Transverse colon (tissue), 4 donors: ENCODE measurements at regions of chr9 and their contacts with region 1.

Region 1: DNA sequence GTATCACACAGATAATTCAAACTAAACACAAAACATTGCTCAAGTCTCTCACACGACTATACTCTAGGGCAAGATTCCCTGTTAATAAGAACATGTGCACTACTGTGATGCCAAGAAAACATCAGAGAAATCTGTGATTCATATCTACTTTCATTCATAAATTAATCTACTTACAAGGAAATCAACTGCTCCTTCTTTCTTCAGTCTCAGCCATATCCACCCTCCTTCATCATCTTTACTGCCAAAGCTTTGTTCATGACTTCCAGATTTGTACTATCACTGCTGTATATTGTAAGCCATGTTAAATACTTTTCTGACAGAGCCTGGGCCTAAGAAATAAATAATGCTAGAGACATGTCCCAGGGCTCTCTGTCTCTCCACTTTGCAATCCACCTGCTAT is 35.1 kb downstream of the CTNNAL1 start:
- DNase-seq: no peak
- H3K4me3 ChIP-seq: no peak overlapping the region
- H3K27ac ChIP-seq: no peak overlapping the region
- H3K4me1 ChIP-seq: peaks cover 0 to 5% (median under 1%) of the 10 kb centered on the region in 4 donors
- H3K27me3 ChIP-seq: no peaks in the 10 kb centered on the region
- CTCF ChIP-seq: no peak
- EP300 ChIP-seq: no peak
- POLR2A ChIP-seq: no peak

Region 2: GRCh38 chr9:108831536-108832500 is 146.4 kb before region 1 on chr9:
- in situ Hi-C with region 1: no loop called
- intact Hi-C with region 1: no loop called
- DNase-seq: no peak
- H3K4me3 ChIP-seq: no peak overlapping the region
- H3K27ac ChIP-seq: no peak overlapping the region
- H3K4me1 ChIP-seq: no peaks in the 10 kb centered on the region
- H3K27me3 ChIP-seq: no peaks in the 10 kb centered on the region
- CTCF ChIP-seq: no peak
- EP300 ChIP-seq: no peak
- POLR2A ChIP-seq: no peak

Region 3: DNA sequence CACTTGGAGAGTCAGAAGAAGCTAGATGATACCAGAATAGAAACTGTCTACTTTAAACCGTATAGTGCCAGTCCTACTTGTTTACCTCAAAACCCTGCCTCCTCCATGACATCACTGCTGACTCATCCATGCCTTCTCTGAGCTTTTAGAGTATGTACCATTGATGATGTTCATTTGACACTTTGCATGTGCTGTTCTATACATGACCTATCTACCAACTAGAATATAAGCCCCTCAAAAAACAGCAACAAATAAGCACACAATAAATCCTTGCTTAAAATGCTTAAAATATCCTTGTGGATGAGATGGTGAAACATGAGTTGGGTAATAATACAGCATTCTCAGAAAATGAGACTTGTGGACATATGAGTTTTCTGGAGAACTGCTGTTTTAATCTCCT is 32.5 kb after region 1 on chr9:
- in situ Hi-C with region 1: no loop called
- intact Hi-C with region 1: loop called (anchors 1 kb)
- DNase-seq: peak; percentile 19
- H3K4me3 ChIP-seq: no peak overlapping the region
- H3K27ac ChIP-seq: peak overlapping the region; percentile 89 to 97 (median 95)
- H3K4me1 ChIP-seq: peaks cover 7 to 35% (median 22%) of the 10 kb centered on the region in 4 donors
- H3K27me3 ChIP-seq: no peaks in the 10 kb centered on the region
- CTCF ChIP-seq: no peak
- EP300 ChIP-seq: no peak
- POLR2A ChIP-seq: no peak